SK-N-SH (cell line): ENCODE measurements at regions of chr2 and their contacts with region 1.

Region 1: GRCh38 chr2:3558205-3559014 is at the start of gene RNASEH1:
- DNase-seq: peak; percentile 100
- H3K4me3 ChIP-seq: peak within 1 kb of the TSS; percentile 90 to 93
- H3K27ac ChIP-seq: peak within 1 kb of the TSS; percentile 91 to 94
- H3K4me1 ChIP-seq: peaks cover 8 to 13% of the 10 kb centered on the region in 2 experiments; a peak in 2 of 4 replicates
- H3K27me3 ChIP-seq: no peaks in the 10 kb centered on the region
- CTCF ChIP-seq: no peak
- EP300 ChIP-seq: no peak
- RAD21 ChIP-seq: no peak; the same call in 1 of the 2 replicates
- polyA plus RNA-seq, gene RNASEH1: 34.4 and 35.3 TPM in 2 replicates

Region 2: GRCh38 chr2:3518496-3519254 is 39.7 kb before region 1 on chr2:
- CTCF ChIA-PET with region 1: interaction called, 3 read pairs
- POLR2A ChIA-PET with region 1: interaction called, 19 read pairs
- DNase-seq: peak; percentile 100
- H3K4me3 ChIP-seq: peak overlapping the region; percentile 80 to 82
- H3K27ac ChIP-seq: peak overlapping the region; percentile 89 to 96
- H3K4me1 ChIP-seq: peaks cover 16 to 29% of the 10 kb centered on the region in 2 experiments
- H3K27me3 ChIP-seq: no peaks in the 10 kb centered on the region
- CTCF ChIP-seq: no peak
- EP300 ChIP-seq: no peak
- RAD21 ChIP-seq: no peak

Region 3: DNA sequence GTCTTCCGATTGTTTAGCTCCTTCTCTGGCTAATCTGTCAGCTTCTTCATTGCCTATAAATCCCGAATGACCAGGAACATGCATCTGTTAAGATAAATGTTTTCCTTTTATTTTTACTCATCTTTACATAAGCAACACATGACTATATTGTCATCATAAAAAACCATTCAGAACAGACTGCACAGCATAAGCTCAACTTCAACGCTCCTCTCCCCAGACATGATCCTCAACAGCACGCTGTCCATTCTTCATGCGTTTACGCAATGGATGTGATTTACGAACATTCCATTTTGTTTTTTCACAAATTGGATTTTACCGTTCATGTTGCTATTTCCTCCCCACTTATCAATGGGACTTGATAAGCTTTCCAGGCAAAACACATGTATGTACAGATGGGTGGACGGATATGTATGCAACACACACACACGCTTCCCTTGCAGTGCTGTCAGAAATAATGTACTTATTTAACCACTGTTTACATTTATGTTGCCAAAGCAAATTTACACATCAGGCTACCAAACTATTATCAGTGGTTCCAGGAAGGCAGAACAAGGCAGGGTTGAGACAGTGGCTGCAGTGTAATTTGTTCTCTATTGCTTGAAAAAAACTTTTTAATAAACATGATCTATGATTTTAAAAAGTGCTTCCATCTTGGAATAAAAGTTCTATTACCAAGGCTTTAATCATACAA is 12.5 kb before region 1 on chr2:
- CTCF ChIA-PET with region 1: interaction called, 10 read pairs
- POLR2A ChIA-PET with region 1: interaction called, 7 read pairs
- DNase-seq: no peak
- H3K4me3 ChIP-seq: no peak overlapping the region
- H3K27ac ChIP-seq: no peak overlapping the region
- H3K4me1 ChIP-seq: no peaks in the 10 kb centered on the region
- H3K27me3 ChIP-seq: no peaks in the 10 kb centered on the region
- CTCF ChIP-seq: no peak
- EP300 ChIP-seq: no peak
- RAD21 ChIP-seq: no peak

Region 4: GRCh38 chr2:3575534-3576262 is 17.3 kb after region 1 on chr2:
- CTCF ChIA-PET with region 1: interaction called, 3 read pairs
- POLR2A ChIA-PET with region 1: interaction called, 36 read pairs
- DNase-seq: peak; percentile 55
- H3K4me3 ChIP-seq: peak overlapping the region; percentile 86 to 100
- H3K27ac ChIP-seq: peak overlapping the region; percentile 81 to 93
- H3K4me1 ChIP-seq: peaks cover 33 to 40% of the 10 kb centered on the region in 2 experiments; a peak in 3 of 4 replicates
- H3K27me3 ChIP-seq: no peaks in the 10 kb centered on the region
- CTCF ChIP-seq: no peak
- EP300 ChIP-seq: no peak
- RAD21 ChIP-seq: no peak

Region 5: GRCh38 chr2:3594493-3595281 is 36.3 kb after region 1 on chr2 and contains the start of gene COLEC11:
- CTCF ChIA-PET with region 1: no interaction called
- POLR2A ChIA-PET with region 1: interaction called, 13 read pairs
- DNase-seq: peak; percentile 96
- H3K4me3 ChIP-seq: peak within 1 kb of the TSS; percentile 30 to 38; a peak in 3 of 4 replicates
- H3K27ac ChIP-seq: peak within 1 kb of the TSS; percentile 20 to 99; a peak in 3 of 4 replicates
- H3K4me1 ChIP-seq: peaks cover 0 to 39% of the 10 kb centered on the region in 2 experiments; a peak in 2 of 4 replicates
- H3K27me3 ChIP-seq: no peaks in the 10 kb centered on the region
- CTCF ChIP-seq: peak; percentile 38
- EP300 ChIP-seq: no peak; a peak in 2 of 4 replicates
- RAD21 ChIP-seq: peak; percentile 47
- polyA plus RNA-seq, gene COLEC11: 8.7 and 15.2 TPM in 2 replicates